ENCODE measurements at regions of chr7 and their contacts with region 1.

Region 1: GRCh38 chr7:151232091-151232916 is at the start of gene CHPF2:
- DNase-seq: peak; percentile 83 to 90 (median 87)
- H3K4me3 ChIP-seq: peak within 1 kb of the TSS; percentile 75 to 94
- H3K4me3 Mint-ChIP-seq: peak within 1 kb of the TSS; percentile 98 to 100 (median 99)
- H3K27ac ChIP-seq: peak within 1 kb of the TSS; percentile 85
- H3K27ac Mint-ChIP-seq: peak within 1 kb of the TSS; percentile 95 to 99 (median 98)
- H3K4me1 ChIP-seq: peaks cover 38% of the 10 kb centered on the region
- H3K4me1 Mint-ChIP-seq: peaks cover 18 to 55% (median 33%) of the 10 kb centered on the region in 4 donors
- H3K27me3 ChIP-seq: no peaks in the 10 kb centered on the region
- H3K27me3 Mint-ChIP-seq: no peaks in the 10 kb centered on the region
- total RNA-seq, gene CHPF2: 52.2 to 52.3 TPM

Region 2: GRCh38 chr7:151028131-151028947 is 204.0 kb before region 1 on chr7 and contains the start of gene ABCB8:
- CTCF ChIA-PET with region 1: no interaction called
- POLR2A ChIA-PET with region 1: no interaction called
- intact Hi-C with region 1: no loop called
- DNase-seq: peak; percentile 99 to 100 (median 99)
- H3K4me3 ChIP-seq: peak within 1 kb of the TSS; percentile 84 to 88
- H3K4me3 Mint-ChIP-seq: peak within 1 kb of the TSS; percentile 92 to 97 (median 95)
- H3K27ac ChIP-seq: peak within 1 kb of the TSS; percentile 88
- H3K27ac Mint-ChIP-seq: peak within 1 kb of the TSS; percentile 99 to 100 (median 99)
- H3K4me1 ChIP-seq: peaks cover 21% of the 10 kb centered on the region
- H3K4me1 Mint-ChIP-seq: peaks cover 13 to 28% (median 21%) of the 10 kb centered on the region in 4 donors
- H3K27me3 ChIP-seq: no peaks in the 10 kb centered on the region
- H3K27me3 Mint-ChIP-seq: no peaks in the 10 kb centered on the region
- total RNA-seq, gene ABCB8: 71.2 to 75.8 TPM

Region 3: GRCh38 chr7:151080522-151081169 is 151.7 kb before region 1 on chr7 and contains the start of gene FASTK:
- CTCF ChIA-PET with region 1: no interaction called
- POLR2A ChIA-PET with region 1: no interaction called
- intact Hi-C with region 1: loop called (anchors 5 kb)
- DNase-seq: peak; percentile 86 to 92 (median 89)
- H3K4me3 ChIP-seq: peak within 1 kb of the TSS; percentile 91 to 93
- H3K4me3 Mint-ChIP-seq: peak within 1 kb of the TSS; percentile 85 to 92 (median 89)
- H3K27ac ChIP-seq: peak within 1 kb of the TSS; percentile 90
- H3K27ac Mint-ChIP-seq: peak within 1 kb of the TSS; percentile 72 to 97 (median 91)
- H3K4me1 ChIP-seq: peaks cover 52% of the 10 kb centered on the region
- H3K4me1 Mint-ChIP-seq: peaks cover 23 to 57% (median 36%) of the 10 kb centered on the region in 4 donors
- H3K27me3 ChIP-seq: no peaks in the 10 kb centered on the region
- H3K27me3 Mint-ChIP-seq: no peaks in the 10 kb centered on the region
- total RNA-seq, gene FASTK: 123 to 126 TPM

Region 4: DNA sequence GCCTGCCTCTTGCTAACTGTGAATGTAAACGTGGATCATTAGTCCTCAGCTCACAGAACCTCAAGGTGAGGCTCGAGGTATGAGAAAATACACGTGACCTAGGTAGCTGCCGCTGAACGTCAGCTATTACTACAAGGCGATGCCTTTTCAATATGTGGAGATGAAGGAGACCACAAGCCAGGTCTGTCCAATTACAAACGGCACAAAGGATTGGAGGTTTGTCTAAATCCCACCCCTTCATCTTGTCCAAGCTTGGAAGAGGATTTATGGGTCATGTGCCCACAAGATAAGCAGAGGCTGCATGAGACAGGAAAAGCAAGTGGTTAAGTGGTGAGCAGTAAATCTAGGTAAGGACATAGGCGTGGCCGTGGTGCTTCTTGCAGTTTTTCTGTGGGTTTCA is 25.4 kb before region 1 on chr7:
- CTCF ChIA-PET with region 1: no interaction called
- POLR2A ChIA-PET with region 1: interaction called, 25 read pairs
- intact Hi-C with region 1: loop called (anchors 1 kb)
- DNase-seq: peak; percentile 71 to 83 (median 81)
- H3K4me3 ChIP-seq: no peak overlapping the region
- H3K4me3 Mint-ChIP-seq: peak overlapping the region; percentile 52 to 89 (median 78)
- H3K27ac ChIP-seq: peak overlapping the region; percentile 57
- H3K27ac Mint-ChIP-seq: peak overlapping the region; percentile 82 to 99 (median 98)
- H3K4me1 ChIP-seq: peaks cover 37% of the 10 kb centered on the region
- H3K4me1 Mint-ChIP-seq: peaks cover 27 to 56% (median 40%) of the 10 kb centered on the region in 4 donors
- H3K27me3 ChIP-seq: no peaks in the 10 kb centered on the region
- H3K27me3 Mint-ChIP-seq: no peaks in the 10 kb centered on the region

Measured in CD4-positive, alpha-beta memory T cell (primary cell).